Posterior vena cava (tissue), 2 donors: ENCODE measurements at regions of chr10 and their contacts with region 1.

Region 1: GRCh38 chr10:110074758-110075671 is 67.2 kb downstream of the ADD3 start:
- DNase-seq: no peak

Region 2: DNA sequence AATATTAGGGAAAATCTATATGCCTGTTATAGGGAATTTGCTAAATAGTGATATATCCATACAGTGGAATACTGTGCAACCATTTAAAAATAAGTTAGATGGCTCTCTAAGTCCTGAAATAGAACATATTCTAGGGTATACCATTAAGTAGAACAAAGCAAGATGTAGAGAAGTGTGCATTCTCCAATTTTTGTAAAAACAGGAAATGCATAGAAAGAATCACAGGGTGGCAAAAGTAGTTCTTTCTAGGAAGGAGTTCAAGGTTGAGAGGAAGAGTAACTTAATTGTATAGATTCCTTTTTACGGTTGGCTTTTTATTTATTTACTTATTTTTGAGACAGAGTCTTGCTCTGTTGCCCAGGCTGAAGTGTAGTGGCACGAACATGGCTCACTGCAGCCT is 23.5 kb before region 1 on chr10:
- intact Hi-C with region 1: loop called in 1 of 2 experiments (anchors 1 kb)
- DNase-seq: no peak

Region 3: GRCh38 chr10:110210674-110211464 is 135.9 kb after region 1 on chr10:
- intact Hi-C with region 1: no loop called
- DNase-seq: peak; percentile 99